ENCODE measurements at regions of chr2 and their contacts with region 1.

Region 1: GRCh38 chr2:30862054-30862651 is 54.9 kb upstream of the CAPN13 start:
- DNase-seq: peak; percentile 24
- H3K4me3 ChIP-seq: no peak overlapping the region
- H3K27ac ChIP-seq: no peak overlapping the region
- H3K27me3 ChIP-seq: no peaks in the 10 kb centered on the region
- CTCF ChIP-seq: peak; percentile 69

Region 2: GRCh38 chr2:30846971-30847729 is 15.0 kb before region 1 on chr2:
- CTCF ChIA-PET with region 1: no interaction called
- POLR2A ChIA-PET with region 1: no interaction called
- DNase-seq: no peak
- H3K4me3 ChIP-seq: no peak overlapping the region
- H3K27ac ChIP-seq: no peak overlapping the region
- H3K27me3 ChIP-seq: no peaks in the 10 kb centered on the region
- CTCF ChIP-seq: no peak

Region 3: GRCh38 chr2:31170071-31170698 is 308.0 kb after region 1 on chr2:
- CTCF ChIA-PET with region 1: interaction called, 10 read pairs
- POLR2A ChIA-PET with region 1: no interaction called
- DNase-seq: peak; percentile 15
- H3K4me3 ChIP-seq: no peak overlapping the region
- H3K27ac ChIP-seq: no peak overlapping the region
- H3K27me3 ChIP-seq: no peaks in the 10 kb centered on the region
- CTCF ChIP-seq: peak; percentile 93